PC-9 (cell line): ENCODE measurements at regions of chr18 and their contacts with region 1.

Region 1: DNA sequence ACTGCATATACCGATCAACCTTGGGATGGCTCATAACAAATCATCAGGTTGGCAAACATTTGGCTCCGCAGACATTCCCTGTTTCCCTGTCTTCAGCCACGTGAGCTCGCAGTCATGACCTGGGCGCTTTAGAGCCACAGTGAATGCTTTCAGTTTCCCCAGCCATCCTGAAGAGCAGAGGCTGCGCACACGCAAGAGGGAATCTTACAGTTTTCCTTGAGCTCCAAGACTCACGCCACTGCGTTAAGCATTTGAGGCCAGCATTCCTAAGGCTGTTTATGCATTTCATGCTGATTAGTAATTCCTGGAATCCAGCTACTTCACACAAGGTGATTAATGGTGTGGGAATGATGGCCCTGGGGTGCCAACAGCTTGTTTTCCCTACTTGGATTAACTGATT is 95.1 kb downstream of the MTCL1 start:
- DNase-seq: peak; percentile 79 to 98
- H3K4me3 ChIP-seq: peak overlapping the region; percentile 41; the same call in 1 of the 2 replicates
- H3K27ac ChIP-seq: peak overlapping the region; percentile 97
- H3K4me1 ChIP-seq: peaks cover 76% of the 10 kb centered on the region
- H3K27me3 ChIP-seq: no peaks in the 10 kb centered on the region
- CTCF ChIP-seq: no peak

Region 2: DNA sequence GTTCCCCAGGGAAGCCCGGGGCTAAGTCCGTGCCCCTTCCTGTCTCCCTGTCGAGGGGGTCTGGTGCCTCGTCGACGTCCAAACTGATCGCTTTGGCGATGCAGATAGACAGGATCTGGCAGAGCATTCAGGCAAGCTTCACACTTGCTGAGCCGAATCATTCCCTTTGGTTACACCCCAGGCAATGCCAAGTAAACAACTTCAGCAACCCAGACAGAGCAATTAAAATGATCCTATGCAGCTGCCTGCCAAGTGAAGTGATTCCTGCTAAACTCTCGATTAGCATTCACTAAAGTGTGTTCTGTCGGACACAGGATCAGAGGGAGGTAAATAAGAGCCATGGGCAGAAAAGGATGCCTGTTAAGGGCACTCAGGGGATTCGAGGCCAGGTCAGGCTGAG is 299.4 kb before region 1 on chr18:
- CTCF ChIA-PET with region 1: no interaction called
- POLR2A ChIA-PET with region 1: interaction called, 28 read pairs
- intact Hi-C with region 1: no loop called
- DNase-seq: no peak
- H3K4me3 ChIP-seq: no peak overlapping the region
- H3K27ac ChIP-seq: no peak overlapping the region
- H3K4me1 ChIP-seq: peaks cover 7% of the 10 kb centered on the region; the same call in 1 of the 2 replicates
- H3K27me3 ChIP-seq: peaks cover 12% of the 10 kb centered on the region; the same call in 1 of the 2 replicates
- CTCF ChIP-seq: no peak

Region 3: GRCh38 chr18:8730080-8730827 is 70.2 kb before region 1 on chr18:
- CTCF ChIA-PET with region 1: no interaction called
- POLR2A ChIA-PET with region 1: interaction called, 3 read pairs
- intact Hi-C with region 1: loop called (anchors 2 kb)
- DNase-seq: peak; percentile 79 to 90
- H3K4me3 ChIP-seq: peak overlapping the region; percentile 2; the same call in 1 of the 2 replicates
- H3K27ac ChIP-seq: peak overlapping the region; percentile 30
- H3K4me1 ChIP-seq: peaks cover 24% of the 10 kb centered on the region
- H3K27me3 ChIP-seq: no peaks in the 10 kb centered on the region
- CTCF ChIP-seq: no peak

Region 4: GRCh38 chr18:8858888-8859511 is 58.6 kb after region 1 on chr18:
- CTCF ChIA-PET with region 1: interaction called, 3 read pairs
- POLR2A ChIA-PET with region 1: no interaction called
- intact Hi-C with region 1: loop called (anchors 1 kb)
- DNase-seq: peak; percentile 19 to 92
- H3K4me3 ChIP-seq: no peak overlapping the region
- H3K27ac ChIP-seq: peak overlapping the region; percentile 45
- H3K4me1 ChIP-seq: peaks cover 37% of the 10 kb centered on the region
- H3K27me3 ChIP-seq: no peaks in the 10 kb centered on the region
- CTCF ChIP-seq: no peak

Region 5: GRCh38 chr18:8900552-8900951 is 100.1 kb after region 1 on chr18:
- CTCF ChIA-PET with region 1: no interaction called
- POLR2A ChIA-PET with region 1: interaction called, 30 read pairs
- intact Hi-C with region 1: no loop called
- DNase-seq: no peak
- H3K4me3 ChIP-seq: no peak overlapping the region
- H3K27ac ChIP-seq: no peak overlapping the region
- H3K4me1 ChIP-seq: no peaks in the 10 kb centered on the region
- H3K27me3 ChIP-seq: no peaks in the 10 kb centered on the region
- CTCF ChIP-seq: no peak

Region 6: GRCh38 chr18:8948471-8949149 is 148.2 kb after region 1 on chr18:
- CTCF ChIA-PET with region 1: interaction called, 8 read pairs
- POLR2A ChIA-PET with region 1: interaction called, 8 read pairs
- intact Hi-C with region 1: loop called (anchors 2 kb)
- DNase-seq: peak; percentile 54 to 80
- H3K4me3 ChIP-seq: no peak overlapping the region
- H3K27ac ChIP-seq: peak overlapping the region; percentile 20; the same call in 1 of the 2 replicates
- H3K4me1 ChIP-seq: peaks cover 53% of the 10 kb centered on the region
- H3K27me3 ChIP-seq: no peaks in the 10 kb centered on the region
- CTCF ChIP-seq: no peak

Region 7: DNA sequence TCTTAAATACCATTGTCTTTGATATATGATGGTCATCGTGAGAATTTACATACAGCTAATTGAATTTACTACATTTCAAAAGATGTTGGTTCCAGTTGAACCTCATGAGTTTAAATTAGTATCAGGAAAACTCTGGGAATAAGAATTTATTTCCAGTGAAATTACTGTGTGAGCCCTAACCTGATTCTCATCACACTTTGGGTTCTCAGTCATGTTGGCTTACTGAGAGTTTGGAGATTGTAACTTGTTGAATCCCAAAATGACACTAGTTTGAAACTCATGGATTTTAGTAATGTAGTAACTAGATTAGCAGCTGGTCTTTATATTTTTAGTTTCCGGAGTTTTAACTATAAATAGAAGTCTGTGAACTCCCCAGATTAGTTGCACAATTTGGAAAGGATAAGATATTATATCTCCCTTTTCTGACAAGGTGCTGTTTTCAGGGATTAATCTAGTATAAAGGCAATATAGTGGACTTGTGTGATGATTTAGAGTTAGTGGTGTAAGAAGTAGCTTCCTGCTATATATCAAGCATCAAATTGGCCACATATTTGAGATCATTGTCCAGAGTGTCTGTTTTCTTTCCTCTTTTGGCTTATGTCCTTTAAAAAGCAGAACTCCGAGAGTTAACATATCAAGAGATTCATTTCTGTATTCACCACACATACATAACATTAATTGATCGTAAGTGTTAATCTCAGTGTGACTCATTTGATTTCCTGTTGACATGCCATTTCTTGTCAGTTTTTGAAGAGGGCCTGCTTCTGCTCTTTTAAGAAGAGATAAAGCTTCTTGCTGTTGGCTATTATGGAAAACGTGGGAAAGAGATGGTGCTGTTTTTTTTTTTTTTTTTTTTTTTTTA is 317.8 kb after region 1 on chr18:
- CTCF ChIA-PET with region 1: no interaction called
- POLR2A ChIA-PET with region 1: interaction called, 19 read pairs
- intact Hi-C with region 1: no loop called
- DNase-seq: no peak
- H3K4me3 ChIP-seq: no peak overlapping the region
- H3K27ac ChIP-seq: peak overlapping the region; percentile 85; the same call in 1 of the 2 replicates
- H3K4me1 ChIP-seq: peaks cover 29% of the 10 kb centered on the region
- H3K27me3 ChIP-seq: no peaks in the 10 kb centered on the region
- CTCF ChIP-seq: no peak

Region 8: GRCh38 chr18:10081492-10081891 is 1281.0 kb after region 1 on chr18:
- CTCF ChIA-PET with region 1: no interaction called
- POLR2A ChIA-PET with region 1: no interaction called
- intact Hi-C with region 1: no loop called
- DNase-seq: no peak
- H3K4me3 ChIP-seq: no peak overlapping the region
- H3K27ac ChIP-seq: no peak overlapping the region
- H3K4me1 ChIP-seq: peaks cover 17% of the 10 kb centered on the region
- H3K27me3 ChIP-seq: no peaks in the 10 kb centered on the region
- CTCF ChIP-seq: no peak